Mammary epithelial cell (primary cell): ENCODE measurements at regions of chr1 and their contacts with region 1.

Region 1: DNA sequence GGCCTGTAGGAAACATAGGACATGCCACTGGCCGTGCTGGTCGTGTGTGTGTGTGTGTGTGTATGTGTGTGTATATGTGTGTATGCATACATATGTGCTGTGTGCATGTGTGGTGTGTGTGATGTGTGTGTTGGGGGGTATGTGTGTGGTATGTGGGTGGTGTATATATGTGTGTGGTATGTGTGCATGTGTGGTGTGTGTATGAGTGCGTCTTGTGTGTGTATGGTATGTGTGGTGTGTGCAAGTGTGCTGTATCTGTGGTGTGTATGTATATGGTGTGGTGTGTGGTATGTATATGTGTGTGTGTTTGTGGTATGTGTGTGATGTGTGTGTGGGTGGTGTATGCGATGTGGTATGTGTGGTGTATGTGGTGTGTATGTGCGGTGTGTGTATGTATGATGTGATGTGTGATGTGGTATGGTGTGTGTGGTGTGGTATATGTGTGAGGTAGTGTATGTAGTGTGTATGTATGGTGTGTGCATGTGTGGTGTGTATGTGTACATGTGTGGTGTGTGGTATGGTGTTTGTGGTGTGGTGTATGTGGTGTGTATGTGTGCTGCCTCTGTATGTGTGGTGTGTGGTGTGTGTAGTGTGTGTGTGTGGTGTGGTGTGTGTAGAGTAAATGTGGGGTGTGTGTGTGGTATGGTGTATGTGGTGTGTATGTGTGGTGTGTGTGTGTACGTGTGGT is 120.8 kb upstream of the CACHD1 start:
- DNase-seq: no peak
- H3K4me3 ChIP-seq: no peak overlapping the region
- H3K27ac ChIP-seq: no peak overlapping the region
- H3K4me1 ChIP-seq: peaks cover 16% of the 10 kb centered on the region
- H3K27me3 ChIP-seq: no peaks in the 10 kb centered on the region
- CTCF ChIP-seq: no peak

Region 2: GRCh38 chr1:63223426-63223825 is 1125.7 kb before region 1 on chr1:
- CTCF ChIA-PET with region 1: no interaction called
- dilution Hi-C with region 1: no loop called
- in situ Hi-C with region 1: no loop called
- intact Hi-C with region 1: no loop called
- DNase-seq: no peak
- H3K4me3 ChIP-seq: no peak overlapping the region
- H3K27ac ChIP-seq: no peak overlapping the region
- H3K4me1 ChIP-seq: no peaks in the 10 kb centered on the region
- H3K27me3 ChIP-seq: no peaks in the 10 kb centered on the region
- CTCF ChIP-seq: no peak

Region 3: GRCh38 chr1:64282354-64282753 is 66.8 kb before region 1 on chr1:
- CTCF ChIA-PET with region 1: no interaction called
- dilution Hi-C with region 1: no loop called
- in situ Hi-C with region 1: no loop called
- intact Hi-C with region 1: no loop called
- DNase-seq: peak; percentile 67
- H3K4me3 ChIP-seq: no peak overlapping the region
- H3K27ac ChIP-seq: no peak overlapping the region
- H3K4me1 ChIP-seq: peaks cover 6% of the 10 kb centered on the region
- H3K27me3 ChIP-seq: no peaks in the 10 kb centered on the region
- CTCF ChIP-seq: no peak

Region 4: GRCh38 chr1:64366821-64367220 is 17.7 kb after region 1 on chr1:
- CTCF ChIA-PET with region 1: no interaction called
- dilution Hi-C with region 1: no loop called
- in situ Hi-C with region 1: no loop called
- intact Hi-C with region 1: no loop called
- DNase-seq: no peak
- H3K4me3 ChIP-seq: no peak overlapping the region
- H3K27ac ChIP-seq: no peak overlapping the region
- H3K4me1 ChIP-seq: no peaks in the 10 kb centered on the region
- H3K27me3 ChIP-seq: no peaks in the 10 kb centered on the region
- CTCF ChIP-seq: no peak

Region 5: DNA sequence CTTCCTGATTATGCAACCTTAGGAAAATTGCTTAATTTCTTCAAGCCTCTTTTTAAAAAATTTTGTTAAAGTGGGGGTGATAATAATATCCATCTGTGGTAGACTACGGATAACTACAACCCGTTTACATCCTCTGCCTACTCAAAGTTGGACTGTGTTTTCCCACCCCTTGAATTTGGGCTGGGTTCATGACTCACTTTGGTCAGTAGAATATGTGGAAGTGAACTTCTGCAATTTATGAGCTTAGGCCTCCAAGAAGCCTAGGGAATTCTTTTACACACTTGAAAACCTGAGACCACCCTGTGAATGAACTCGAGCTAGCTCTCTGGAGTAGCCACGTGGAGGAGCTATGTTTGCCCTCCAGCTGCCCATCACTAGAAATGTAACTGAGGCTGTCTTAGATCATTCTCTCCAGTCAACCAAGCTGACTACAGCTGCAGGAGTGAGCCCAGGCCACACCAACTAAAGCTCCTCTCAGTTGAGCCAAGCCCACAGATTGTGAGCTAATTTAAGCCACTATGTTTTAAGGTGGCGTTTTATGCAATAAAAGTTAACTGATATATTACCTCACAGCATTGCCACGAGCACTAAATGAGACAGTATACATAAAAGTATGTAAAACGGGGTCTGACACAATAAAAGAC is 91.2 kb after region 1 on chr1:
- CTCF ChIA-PET with region 1: no interaction called
- dilution Hi-C with region 1: loop called (anchors 5 kb)
- in situ Hi-C with region 1: no loop called
- intact Hi-C with region 1: no loop called
- DNase-seq: no peak
- H3K4me3 ChIP-seq: no peak overlapping the region
- H3K27ac ChIP-seq: no peak overlapping the region
- H3K4me1 ChIP-seq: no peaks in the 10 kb centered on the region
- H3K27me3 ChIP-seq: no peaks in the 10 kb centered on the region
- CTCF ChIP-seq: no peak